Body of pancreas (tissue), 4 donors: ENCODE measurements at regions of chr17 and their contacts with region 1.

Region 1: DNA sequence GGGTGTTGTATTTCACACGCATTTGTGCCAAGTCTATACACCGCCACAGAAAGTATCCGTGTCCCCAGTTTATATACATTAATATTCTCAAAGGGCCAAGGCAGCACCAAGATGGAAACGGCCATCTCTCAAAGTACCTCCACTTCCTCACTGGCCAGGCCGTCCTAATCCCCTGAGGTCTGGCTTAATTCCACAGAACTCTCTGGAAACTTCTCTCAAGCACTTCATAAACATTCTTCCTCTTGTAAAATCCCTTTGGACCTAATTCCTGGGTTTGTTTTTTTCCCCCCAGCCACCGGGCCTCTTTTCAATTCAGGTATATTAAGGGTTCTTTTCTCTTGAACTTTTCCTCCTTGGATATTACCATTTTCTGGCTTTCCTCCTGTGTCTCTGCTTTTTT is 5.1 kb upstream of the ERN1 start:
- DNase-seq: no peak
- ATAC-seq: no peak
- H3K4me3 ChIP-seq: no peak overlapping the region
- H3K27ac ChIP-seq: peak overlapping the region in 2 of 4 donors; percentile 3 to 56
- H3K4me1 ChIP-seq: peaks cover 6% of the 10 kb centered on the region
- H3K27me3 ChIP-seq: no peaks in the 10 kb centered on the region
- CTCF ChIP-seq: no peak
- POLR2A ChIP-seq: no peak

Region 2: GRCh38 chr17:63911657-63912426 is 223.2 kb before region 1 on chr17:
- intact Hi-C with region 1: loop called (anchors 5 kb)
- DNase-seq: peak; percentile 34 to 62 (median 45)
- ATAC-seq: no peak
- H3K4me3 ChIP-seq: no peak overlapping the region
- H3K27ac ChIP-seq: no peak overlapping the region
- H3K4me1 ChIP-seq: no peaks in the 10 kb centered on the region
- H3K27me3 ChIP-seq: no peaks in the 10 kb centered on the region
- CTCF ChIP-seq: peak; percentile 52 to 90 (median 66)
- POLR2A ChIP-seq: no peak

Region 3: DNA sequence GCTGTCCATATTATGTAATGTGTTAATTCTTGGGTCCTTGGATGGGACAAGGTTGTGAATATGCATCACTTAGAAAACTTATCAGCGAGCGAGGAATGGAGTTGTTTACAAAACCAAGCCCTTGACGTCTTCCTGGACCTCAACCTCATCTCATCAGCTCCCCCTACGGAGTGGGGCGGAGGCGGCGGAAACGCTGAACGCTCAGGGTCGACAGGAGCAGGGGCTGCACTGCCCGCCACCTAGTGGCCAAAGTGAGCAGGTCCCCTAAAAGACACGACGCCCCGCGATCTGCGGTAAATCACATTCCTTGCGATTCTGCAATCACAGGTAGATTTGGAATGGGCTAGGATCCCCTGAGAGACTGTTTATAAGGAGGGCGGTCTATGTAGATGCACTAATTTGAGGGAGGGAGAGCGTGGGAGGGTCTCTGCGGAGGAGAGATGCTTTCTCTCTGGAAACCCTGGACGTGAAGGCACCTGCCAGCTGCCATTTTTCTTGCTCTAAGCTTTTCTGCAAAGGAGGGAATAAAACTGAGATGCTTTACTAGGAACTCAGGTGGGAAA is 109.2 kb before region 1 on chr17:
- intact Hi-C with region 1: loop called (anchors 5 kb)
- DNase-seq: peak; percentile 73 to 81 (median 79)
- ATAC-seq: peak; percentile 66
- H3K4me3 ChIP-seq: no peak overlapping the region
- H3K27ac ChIP-seq: peak overlapping the region in 2 of 4 donors; percentile 65 to 67
- H3K4me1 ChIP-seq: peaks cover 28% of the 10 kb centered on the region
- H3K27me3 ChIP-seq: no peaks in the 10 kb centered on the region
- CTCF ChIP-seq: peak; percentile 70 to 89 (median 87)
- POLR2A ChIP-seq: no peak